ENCODE measurements at regions of chr9 and their contacts with region 1.

Region 1: GRCh38 chr9:87336914-87337333 is 160.7 kb upstream of the DAPK1 start:
- DNase-seq: no peak

Region 2: DNA sequence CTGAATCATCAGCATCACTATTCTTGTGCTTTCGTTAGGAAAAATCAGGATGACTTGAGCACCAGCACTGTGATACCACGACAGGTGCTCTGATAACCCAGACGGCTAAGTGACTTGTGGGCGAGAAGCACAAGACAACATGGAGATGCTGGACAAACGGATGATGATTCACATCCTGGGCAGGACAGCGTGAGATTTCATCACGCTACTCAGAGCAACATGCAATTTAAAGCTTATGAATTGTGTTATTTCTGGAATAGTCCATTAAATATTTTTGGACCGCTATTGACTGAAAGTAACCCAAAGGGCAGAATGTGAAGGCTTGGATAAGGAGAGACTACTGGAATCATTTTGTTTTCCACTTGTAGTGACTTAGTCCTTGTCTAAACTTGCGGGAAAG is 46.0 kb after region 1 on chr9:
- intact Hi-C with region 1: no loop called
- DNase-seq: no peak

Region 3: DNA sequence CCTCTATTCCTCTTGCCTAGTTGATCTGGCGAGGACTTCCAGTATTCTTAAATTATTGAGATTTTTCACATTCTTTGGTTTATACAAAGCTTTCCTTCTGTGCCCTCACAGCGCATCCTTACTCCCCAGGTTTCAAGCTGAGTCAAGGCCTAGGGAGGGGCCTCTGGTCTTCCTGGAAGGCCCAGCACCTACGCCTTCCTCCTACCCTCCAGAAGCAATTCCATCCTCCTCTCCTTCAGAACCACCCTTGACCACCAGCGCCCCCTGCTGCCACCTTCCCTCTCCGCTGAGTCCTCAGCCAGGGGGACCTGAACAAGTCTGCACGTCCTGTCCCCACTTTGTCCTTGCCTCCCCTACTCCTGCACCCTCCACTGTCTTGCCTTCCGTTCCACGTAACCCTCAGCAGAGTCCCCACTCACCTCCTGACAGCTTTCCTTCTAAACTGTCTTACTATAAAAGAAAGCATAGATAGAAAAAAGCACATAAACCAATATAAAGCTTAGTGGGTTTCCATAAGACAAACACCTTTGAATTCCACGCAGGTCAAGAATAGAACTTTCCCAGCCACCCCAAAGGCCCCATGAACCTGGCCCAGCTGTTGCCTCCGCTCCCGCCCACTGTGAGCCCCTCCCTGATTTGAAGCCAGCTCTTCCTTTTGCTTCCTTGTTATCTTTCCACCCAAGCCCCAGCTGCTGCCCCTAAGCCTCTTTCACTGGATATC is 326.0 kb after region 1 on chr9:
- intact Hi-C with region 1: loop called (anchors 5 kb)
- DNase-seq: peak; percentile 90

Region 4: GRCh38 chr9:88559661-88560060 is 1222.7 kb after region 1 on chr9:
- intact Hi-C with region 1: no loop called
- DNase-seq: no peak

Measured in posterior vena cava (tissue), 2 donors.